CD4-positive, alpha-beta memory T cell (primary cell): ENCODE measurements at regions of chr10 and their contacts with region 1.

Region 1: GRCh38 chr10:103678178-103678526 is 177.2 kb downstream of the SH3PXD2A start:
- DNase-seq: peak; percentile 88 to 98 (median 91)
- H3K4me3 ChIP-seq: peak overlapping the region; percentile 42 to 56
- H3K4me3 Mint-ChIP-seq: peak overlapping the region; percentile 81 to 93 (median 88)
- H3K27ac ChIP-seq: peak overlapping the region; percentile 86
- H3K27ac Mint-ChIP-seq: peak overlapping the region; percentile 97 to 99 (median 98)
- H3K4me1 ChIP-seq: peaks cover 29% of the 10 kb centered on the region
- H3K4me1 Mint-ChIP-seq: peaks cover 10 to 27% (median 17%) of the 10 kb centered on the region in 4 donors
- H3K27me3 ChIP-seq: no peaks in the 10 kb centered on the region
- H3K27me3 Mint-ChIP-seq: no peaks in the 10 kb centered on the region

Region 2: GRCh38 chr10:103659674-103660363 is 18.3 kb before region 1 on chr10:
- CTCF ChIA-PET with region 1: no interaction called
- POLR2A ChIA-PET with region 1: interaction called, 8 read pairs
- intact Hi-C with region 1: loop called (anchors 1 kb)
- DNase-seq: peak; percentile 53 to 77 (median 58)
- H3K4me3 ChIP-seq: peak overlapping the region; percentile 49 to 74
- H3K4me3 Mint-ChIP-seq: peak overlapping the region; percentile 87 to 92 (median 90)
- H3K27ac ChIP-seq: peak overlapping the region; percentile 76
- H3K27ac Mint-ChIP-seq: peak overlapping the region; percentile 89 to 95 (median 93)
- H3K4me1 ChIP-seq: peaks cover 27% of the 10 kb centered on the region
- H3K4me1 Mint-ChIP-seq: peaks cover 9 to 38% (median 15%) of the 10 kb centered on the region in 4 donors
- H3K27me3 ChIP-seq: no peaks in the 10 kb centered on the region
- H3K27me3 Mint-ChIP-seq: no peaks in the 10 kb centered on the region

Region 3: GRCh38 chr10:103696411-103697145 is 18.4 kb after region 1 on chr10:
- CTCF ChIA-PET with region 1: no interaction called
- POLR2A ChIA-PET with region 1: interaction called, 6 read pairs
- intact Hi-C with region 1: loop called (anchors 1 kb)
- DNase-seq: peak; percentile 56 to 85 (median 57)
- H3K4me3 ChIP-seq: no peak overlapping the region
- H3K4me3 Mint-ChIP-seq: peak overlapping the region in 7 of 8 donors; percentile 59 to 88 (median 79)
- H3K27ac ChIP-seq: peak overlapping the region; percentile 5
- H3K27ac Mint-ChIP-seq: peak overlapping the region; percentile 55 to 94 (median 92)
- H3K4me1 ChIP-seq: peaks cover 48% of the 10 kb centered on the region
- H3K4me1 Mint-ChIP-seq: peaks cover 16 to 40% (median 25%) of the 10 kb centered on the region in 4 donors
- H3K27me3 ChIP-seq: no peaks in the 10 kb centered on the region
- H3K27me3 Mint-ChIP-seq: no peaks in the 10 kb centered on the region

Region 4: GRCh38 chr10:103736763-103737162 is 58.6 kb after region 1 on chr10:
- CTCF ChIA-PET with region 1: no interaction called
- POLR2A ChIA-PET with region 1: no interaction called
- intact Hi-C with region 1: no loop called
- DNase-seq: no peak
- H3K4me3 ChIP-seq: no peak overlapping the region
- H3K4me3 Mint-ChIP-seq: no peak overlapping the region
- H3K27ac ChIP-seq: no peak overlapping the region
- H3K27ac Mint-ChIP-seq: no peak overlapping the region
- H3K4me1 ChIP-seq: no peaks in the 10 kb centered on the region
- H3K4me1 Mint-ChIP-seq: peaks cover 0 to 4% (median 0%) of the 10 kb centered on the region in 4 donors
- H3K27me3 ChIP-seq: no peaks in the 10 kb centered on the region
- H3K27me3 Mint-ChIP-seq: no peaks in the 10 kb centered on the region

Region 5: DNA sequence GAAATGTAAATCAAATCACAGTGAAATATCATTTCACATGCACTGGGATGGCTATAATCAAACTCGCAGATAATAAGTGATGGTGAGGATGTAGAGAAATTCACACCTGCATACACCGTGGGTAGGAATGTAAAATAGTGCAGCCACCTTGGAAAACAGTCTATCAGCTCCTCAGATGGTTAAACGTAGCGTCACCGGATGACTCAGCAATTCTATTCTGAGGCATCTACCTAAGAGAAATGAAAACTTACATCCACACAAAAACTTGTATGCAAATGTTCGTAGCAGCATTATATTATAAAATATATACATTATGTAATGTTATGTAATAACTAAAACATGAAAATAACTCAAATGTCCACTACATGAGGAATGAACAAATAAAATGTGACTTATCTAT is 138.3 kb after region 1 on chr10:
- CTCF ChIA-PET with region 1: no interaction called
- POLR2A ChIA-PET with region 1: no interaction called
- intact Hi-C with region 1: no loop called
- DNase-seq: no peak
- H3K4me3 ChIP-seq: no peak overlapping the region
- H3K4me3 Mint-ChIP-seq: no peak overlapping the region
- H3K27ac ChIP-seq: no peak overlapping the region
- H3K27ac Mint-ChIP-seq: no peak overlapping the region
- H3K4me1 ChIP-seq: no peaks in the 10 kb centered on the region
- H3K4me1 Mint-ChIP-seq: no peaks in the 10 kb centered on the region
- H3K27me3 ChIP-seq: no peaks in the 10 kb centered on the region
- H3K27me3 Mint-ChIP-seq: peaks cover 14% of the 10 kb centered on the region in 2 donors